CD14-positive monocyte (primary cell): ENCODE measurements at regions of chr2 and their contacts with region 1.

Region 1: DNA sequence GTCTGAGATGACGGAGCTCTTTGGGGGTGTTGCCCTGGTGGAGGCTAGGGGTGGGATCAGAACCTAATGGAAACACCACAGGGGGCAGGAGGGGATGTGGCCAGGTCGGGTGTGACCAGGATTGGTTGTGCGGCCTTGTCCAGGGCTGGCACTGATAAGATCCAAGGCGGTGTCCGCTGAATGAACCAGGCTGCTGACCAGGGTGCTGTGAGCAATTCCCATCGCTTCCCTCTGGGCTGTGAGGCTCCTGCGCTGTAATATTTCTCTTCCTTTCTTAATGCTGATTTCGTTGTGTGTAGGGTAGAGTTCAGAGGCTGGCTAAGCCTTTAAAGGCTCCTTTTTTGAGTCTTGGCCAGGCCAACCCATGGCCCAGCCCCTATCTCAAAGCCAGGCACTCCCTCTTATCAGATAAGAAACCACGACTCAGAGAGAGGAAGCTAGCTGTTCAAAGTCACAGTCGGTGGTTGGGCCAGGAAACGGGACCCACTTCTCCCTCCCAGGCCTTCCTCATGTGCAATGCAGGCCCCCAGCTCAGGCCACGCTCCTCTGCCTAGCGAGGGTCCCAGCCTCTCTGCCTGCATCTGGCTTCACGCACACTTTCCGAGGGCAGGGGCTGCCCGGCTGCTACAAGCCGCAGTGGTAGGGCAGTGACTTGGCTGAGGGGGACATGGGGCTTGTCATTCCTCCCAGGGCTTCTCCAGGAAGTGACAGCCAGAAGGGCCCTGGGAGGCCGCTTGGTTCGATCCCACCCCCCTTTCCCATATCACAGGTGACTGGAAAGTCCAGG is 26.0 kb upstream of the FOSL2 start:
- DNase-seq: peak; percentile 42 to 66 (median 56)
- H3K4me3 ChIP-seq: peak overlapping the region in 1 of 3 experiments; percentile 33
- H3K4me3 Mint-ChIP-seq: peak overlapping the region; percentile 67 to 84
- H3K27ac ChIP-seq: peak overlapping the region in 1 of 2 donors; percentile 4
- H3K27ac Mint-ChIP-seq: peak overlapping the region in 6 of 7 donors; percentile 58 to 92 (median 78)
- H3K4me1 ChIP-seq: peaks cover 16 to 23% of the 10 kb centered on the region in 2 donors
- H3K4me1 Mint-ChIP-seq: peaks cover 45% of the 10 kb centered on the region
- H3K27me3 ChIP-seq: no peaks in the 10 kb centered on the region
- H3K27me3 Mint-ChIP-seq: peaks cover 4 to 15% (median 13%) of the 10 kb centered on the region in 3 donors
- CTCF ChIP-seq: no peak

Region 2: GRCh38 chr2:28387082-28387960 is 20.6 kb after region 1 on chr2:
- intact Hi-C with region 1: loop called (anchors 1 to 2 kb)
- DNase-seq: no peak
- H3K4me3 ChIP-seq: no peak overlapping the region
- H3K4me3 Mint-ChIP-seq: no peak overlapping the region
- H3K27ac ChIP-seq: no peak overlapping the region
- H3K27ac Mint-ChIP-seq: no peak overlapping the region
- H3K4me1 ChIP-seq: peaks cover 18 to 25% of the 10 kb centered on the region in 2 donors
- H3K4me1 Mint-ChIP-seq: peaks cover 22% of the 10 kb centered on the region
- H3K27me3 ChIP-seq: no peaks in the 10 kb centered on the region
- H3K27me3 Mint-ChIP-seq: peaks cover 3 to 6% (median 5%) of the 10 kb centered on the region in 3 donors
- CTCF ChIP-seq: no peak